ENCODE measurements at regions of chr22 and their contacts with region 1.

Region 1: DNA sequence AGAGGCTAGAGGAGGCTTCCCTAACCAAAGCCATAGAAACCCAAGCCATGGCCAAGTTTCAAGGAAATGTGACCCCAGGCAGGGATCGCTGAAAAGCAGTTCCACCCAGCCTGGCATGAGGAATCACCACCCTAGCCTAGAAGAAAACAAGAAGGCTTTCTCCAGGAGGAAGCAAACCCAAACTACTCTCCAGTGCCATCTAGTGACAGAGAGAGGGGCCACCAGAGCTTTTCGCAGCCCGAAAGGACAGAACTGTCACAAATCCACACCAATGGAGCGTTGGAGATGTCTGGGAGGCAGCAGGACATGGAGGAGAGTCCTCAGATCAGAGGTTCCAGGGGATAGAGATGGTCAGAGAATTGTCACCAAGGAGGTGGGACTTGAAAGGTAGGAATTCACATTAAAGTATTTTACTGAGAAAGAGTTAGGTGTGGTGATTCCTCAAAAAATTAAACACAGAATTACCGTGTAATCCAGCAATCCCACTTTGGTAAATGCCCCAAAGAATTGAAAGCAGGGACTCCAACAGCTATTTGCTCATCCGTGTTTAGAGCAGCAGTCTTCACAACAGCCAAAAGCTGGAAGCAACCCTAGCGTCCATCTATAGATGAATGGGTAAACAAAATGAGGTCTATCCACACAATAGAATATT is 67.3 kb upstream of the NUP50 start:
- DNase-seq: peak; percentile 36
- ATAC-seq: peak; percentile 73 to 79

Region 2: GRCh38 chr22:44819971-44820631 is 276.3 kb before region 1 on chr22:
- intact Hi-C with region 1: loop called (anchors 5 to 10 kb)
- DNase-seq: peak; percentile 12
- ATAC-seq: peak in 1 of 2 donors; percentile 15

Region 3: DNA sequence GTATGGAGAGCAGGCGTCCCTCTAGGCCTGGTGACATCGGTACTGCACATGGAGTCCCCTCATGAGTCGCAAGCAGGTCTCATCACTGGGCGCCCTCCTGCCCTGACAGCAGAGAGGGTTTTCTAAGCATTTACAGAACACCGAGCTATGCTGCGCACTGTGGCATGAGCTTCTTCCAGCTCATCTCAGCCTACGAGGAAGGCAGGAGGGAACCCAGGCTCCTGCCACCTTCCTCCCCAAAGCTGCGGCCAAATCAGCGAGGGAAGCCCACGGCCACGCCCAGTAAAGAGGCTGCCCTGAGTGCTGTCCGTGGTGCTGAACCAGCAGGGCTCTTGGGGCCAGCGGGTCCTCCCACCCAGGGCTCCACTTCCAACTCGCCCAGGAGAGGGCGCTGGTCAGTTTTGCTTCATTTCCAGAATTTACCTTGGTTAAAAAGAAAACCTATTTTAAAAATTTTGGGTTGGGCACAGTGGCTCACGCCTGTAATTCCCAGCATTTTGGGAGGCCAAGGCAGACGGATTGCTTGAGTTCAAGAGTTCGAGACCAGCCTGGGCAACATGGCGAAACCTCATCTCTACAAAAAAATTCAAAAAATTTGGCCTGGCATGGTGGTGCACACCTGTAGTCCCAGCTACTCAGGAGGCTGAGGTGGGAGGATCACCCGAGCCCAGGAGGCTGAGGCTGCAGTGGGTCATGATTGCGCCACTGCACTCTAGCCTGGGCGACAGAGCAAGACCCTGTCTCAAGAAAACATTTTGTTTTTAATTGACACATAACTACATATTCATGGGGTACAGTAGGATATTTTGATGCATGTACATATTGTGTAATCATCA is 120.7 kb before region 1 on chr22:
- intact Hi-C with region 1: loop called (anchors 2 to 10 kb)
- DNase-seq: peak; percentile 85
- ATAC-seq: peak; percentile 92 to 94